H1 (cell line): ENCODE measurements at regions of chr2 and their contacts with region 1.

Region 1: DNA sequence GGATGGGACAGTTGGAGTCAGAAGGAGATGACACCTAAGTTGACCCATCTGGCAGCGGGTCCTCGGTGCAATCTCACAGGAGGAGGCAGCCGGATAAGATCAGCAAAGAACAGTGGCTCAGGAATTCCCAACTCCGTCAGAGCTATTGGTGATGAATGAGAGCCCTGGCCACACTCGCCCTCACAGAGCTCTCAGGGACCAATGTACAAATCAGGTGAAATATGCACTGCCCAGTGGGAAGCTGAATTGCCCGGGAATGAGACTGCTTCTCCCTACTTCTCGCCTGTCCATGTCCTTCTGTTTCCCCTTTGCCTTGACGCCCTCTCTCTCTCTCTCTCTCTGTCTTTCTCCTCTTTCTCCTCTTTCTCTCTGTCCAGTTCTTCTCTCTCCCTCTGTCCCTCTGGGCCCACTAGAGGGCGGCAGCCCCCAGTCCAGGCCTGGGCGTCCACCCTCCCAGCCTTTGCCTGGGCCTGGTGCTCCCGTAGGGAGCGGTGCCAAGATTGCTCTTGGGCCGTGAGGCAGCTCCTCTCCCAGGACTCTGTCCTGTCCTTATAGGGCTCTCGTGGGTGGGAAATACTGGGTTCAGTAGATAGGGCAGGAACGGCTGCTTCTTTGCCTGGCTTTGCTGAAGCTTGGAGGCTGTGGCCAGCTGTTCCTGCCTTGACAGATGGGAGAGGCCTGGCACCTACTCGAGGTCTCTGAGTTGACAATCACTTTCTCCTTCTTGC is 28.3 kb upstream of the PUM2 start:
- DNase-seq: peak; percentile 34 to 86
- H3K4me3 ChIP-seq: no peak overlapping the region
- H3K27ac ChIP-seq: no peak overlapping the region
- H3K4me1 ChIP-seq: peaks cover 0 to 5% (median 2%) of the 10 kb centered on the region in 4 experiments; a peak in 5 of 7 replicates
- H3K27me3 ChIP-seq: no peaks in the 10 kb centered on the region
- CTCF ChIP-seq: peak; percentile 77 to 87 (median 85)
- EP300 ChIP-seq: no peak
- POLR2A ChIP-seq: no peak
- RAD21 ChIP-seq: peak; percentile 81 to 85

Region 2: GRCh38 chr2:20080839-20081415 is 298.0 kb before region 1 on chr2:
- CTCF ChIA-PET with region 1: no interaction called
- POLR2A ChIA-PET with region 1: no interaction called
- DNase-seq: no peak
- H3K4me3 ChIP-seq: peak overlapping the region in 1 of 4 experiments; percentile 7; a peak in 2 of 8 replicates
- H3K27ac ChIP-seq: no peak overlapping the region
- H3K4me1 ChIP-seq: peaks cover 4 to 9% (median 6%) of the 10 kb centered on the region in 4 experiments; a peak in 6 of 7 replicates
- H3K27me3 ChIP-seq: no peaks in the 10 kb centered on the region
- CTCF ChIP-seq: no peak
- EP300 ChIP-seq: no peak
- POLR2A ChIP-seq: no peak
- RAD21 ChIP-seq: no peak

Region 3: GRCh38 chr2:20326163-20326780 is 52.7 kb before region 1 on chr2:
- CTCF ChIA-PET with region 1: interaction called, 11 read pairs
- POLR2A ChIA-PET with region 1: no interaction called
- DNase-seq: no peak
- H3K4me3 ChIP-seq: no peak overlapping the region
- H3K27ac ChIP-seq: no peak overlapping the region
- H3K4me1 ChIP-seq: peaks cover 0 to 4% (median 1%) of the 10 kb centered on the region in 4 experiments; a peak in 2 of 7 replicates
- H3K27me3 ChIP-seq: no peaks in the 10 kb centered on the region
- CTCF ChIP-seq: peak; percentile 49 to 85 (median 65)
- EP300 ChIP-seq: no peak
- POLR2A ChIP-seq: no peak
- RAD21 ChIP-seq: peak; percentile 66 to 72

Region 4: DNA sequence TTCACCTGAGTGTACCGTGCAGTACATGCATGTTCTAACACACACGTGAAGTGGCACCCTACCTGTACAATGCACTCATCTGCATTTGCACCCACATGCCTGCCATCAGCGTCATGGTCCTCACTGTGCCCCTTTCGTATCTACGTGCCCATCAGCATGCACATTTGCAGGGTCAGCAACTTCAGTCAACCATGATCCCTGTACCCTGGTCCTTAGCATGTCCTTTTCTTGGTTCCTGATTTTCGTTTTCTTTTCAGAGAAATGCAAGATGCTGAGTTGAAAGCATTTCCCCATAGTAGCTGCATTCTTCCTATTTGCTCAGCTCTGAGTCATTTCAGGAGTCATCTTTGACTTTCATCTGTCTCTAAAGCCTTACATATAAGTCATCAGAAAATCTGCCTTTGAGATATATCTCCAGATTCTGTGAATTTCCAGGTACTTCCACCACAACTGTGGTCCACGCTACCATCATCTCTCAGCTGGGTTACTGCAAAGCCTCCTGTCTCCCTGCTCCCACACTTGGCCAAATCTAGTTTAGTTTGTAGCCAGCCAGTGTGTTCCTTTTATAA is 13.6 kb before region 1 on chr2:
- CTCF ChIA-PET with region 1: interaction called, 77 read pairs
- POLR2A ChIA-PET with region 1: interaction called, 3 read pairs
- DNase-seq: no peak
- H3K4me3 ChIP-seq: no peak overlapping the region
- H3K27ac ChIP-seq: no peak overlapping the region
- H3K4me1 ChIP-seq: no peaks in the 10 kb centered on the region
- H3K27me3 ChIP-seq: no peaks in the 10 kb centered on the region; a peak in 1 of 7 replicates
- CTCF ChIP-seq: no peak
- EP300 ChIP-seq: no peak
- POLR2A ChIP-seq: no peak
- RAD21 ChIP-seq: no peak

Region 5: GRCh38 chr2:20411361-20411894 is 32.5 kb after region 1 on chr2:
- CTCF ChIA-PET with region 1: interaction called, 132 read pairs
- POLR2A ChIA-PET with region 1: interaction called, 3 read pairs
- DNase-seq: peak; percentile 56 to 90
- H3K4me3 ChIP-seq: no peak overlapping the region
- H3K27ac ChIP-seq: no peak overlapping the region
- H3K4me1 ChIP-seq: peaks cover 0 to 2% (median 0%) of the 10 kb centered on the region in 4 experiments; a peak in 1 of 7 replicates
- H3K27me3 ChIP-seq: no peaks in the 10 kb centered on the region
- CTCF ChIP-seq: peak; percentile 84 to 98 (median 89)
- EP300 ChIP-seq: no peak
- POLR2A ChIP-seq: no peak
- RAD21 ChIP-seq: peak; percentile 73 to 81

Region 6: GRCh38 chr2:20424300-20425290 is 45.6 kb after region 1 on chr2:
- CTCF ChIA-PET with region 1: interaction called, 61 read pairs
- POLR2A ChIA-PET with region 1: no interaction called
- DNase-seq: no peak
- H3K4me3 ChIP-seq: no peak overlapping the region
- H3K27ac ChIP-seq: no peak overlapping the region; the same call in 1 of the 2 replicates
- H3K4me1 ChIP-seq: no peaks in the 10 kb centered on the region; a peak in 1 of 7 replicates
- H3K27me3 ChIP-seq: no peaks in the 10 kb centered on the region
- CTCF ChIP-seq: no peak
- EP300 ChIP-seq: no peak
- POLR2A ChIP-seq: no peak
- RAD21 ChIP-seq: no peak

Region 7: GRCh38 chr2:20468549-20469500 is 89.9 kb after region 1 on chr2:
- CTCF ChIA-PET with region 1: no interaction called
- POLR2A ChIA-PET with region 1: no interaction called
- DNase-seq: no peak
- H3K4me3 ChIP-seq: no peak overlapping the region
- H3K27ac ChIP-seq: no peak overlapping the region
- H3K4me1 ChIP-seq: no peaks in the 10 kb centered on the region
- H3K27me3 ChIP-seq: peaks cover 0 to 2% (median 0%) of the 10 kb centered on the region in 4 experiments; a peak in 1 of 7 replicates
- CTCF ChIP-seq: no peak
- EP300 ChIP-seq: no peak
- POLR2A ChIP-seq: no peak
- RAD21 ChIP-seq: no peak

Region 8: DNA sequence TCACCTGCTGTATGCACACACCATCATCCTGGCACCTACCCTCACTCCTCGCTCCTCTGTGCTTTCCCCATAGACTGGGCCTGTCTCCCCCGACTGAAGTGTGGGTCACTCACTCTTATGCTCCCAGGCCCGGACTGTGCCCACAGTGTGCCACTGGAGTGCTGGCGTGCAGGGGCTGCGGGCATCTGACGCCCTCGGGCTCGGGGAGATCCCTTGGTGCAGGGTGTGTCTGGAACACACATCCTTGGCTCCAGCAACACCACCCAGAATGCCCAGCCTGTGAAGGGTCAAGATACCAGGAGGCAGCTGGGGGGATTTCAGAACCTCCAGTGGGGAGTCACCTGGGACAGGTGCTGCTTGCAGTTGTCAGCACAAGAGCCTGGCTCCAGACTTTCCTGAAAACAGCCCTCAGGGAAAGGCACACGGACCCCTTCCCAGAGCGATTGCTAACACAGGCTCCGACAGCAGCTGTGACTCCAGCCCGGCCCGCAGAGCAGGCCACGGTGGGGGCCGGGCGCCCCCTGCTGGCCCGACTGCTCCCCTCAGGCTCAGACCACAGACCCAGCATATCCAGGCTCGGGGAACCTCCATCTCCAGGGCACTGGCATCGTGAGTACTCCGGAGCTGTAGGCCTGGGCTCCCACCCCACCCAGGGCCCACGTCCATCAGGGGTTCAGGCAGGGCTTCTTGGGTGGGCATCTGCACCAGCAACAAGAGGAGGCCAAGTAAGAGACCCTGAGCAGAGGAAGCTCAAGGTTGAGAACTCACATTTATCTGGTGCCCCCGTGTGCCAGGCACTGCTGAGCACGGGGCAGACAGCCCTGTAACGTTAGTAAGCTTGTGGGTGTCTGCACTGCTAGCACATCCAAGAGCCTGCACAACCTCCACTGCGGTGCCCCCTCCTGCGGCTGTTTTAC is 263.4 kb after region 1 on chr2:
- CTCF ChIA-PET with region 1: interaction called, 152 read pairs
- POLR2A ChIA-PET with region 1: no interaction called
- DNase-seq: peak; percentile 50 to 91
- H3K4me3 ChIP-seq: no peak overlapping the region
- H3K27ac ChIP-seq: no peak overlapping the region
- H3K4me1 ChIP-seq: no peaks in the 10 kb centered on the region
- H3K27me3 ChIP-seq: no peaks in the 10 kb centered on the region
- CTCF ChIP-seq: peak in 2 of 3 experiments; percentile 95; a peak in 3 of 4 replicates
- EP300 ChIP-seq: no peak
- POLR2A ChIP-seq: no peak
- RAD21 ChIP-seq: peak; percentile 93 to 95